PC-9 (cell line): ENCODE measurements at regions of chr9 and their contacts with region 1.

Region 1: GRCh38 chr9:35675732-35676392 is 2.1 kb downstream of the CA9 start:
- DNase-seq: no peak
- H3K4me3 ChIP-seq: no peak overlapping the region
- H3K27ac ChIP-seq: no peak overlapping the region
- H3K4me1 ChIP-seq: peaks cover 13% of the 10 kb centered on the region
- H3K27me3 ChIP-seq: no peaks in the 10 kb centered on the region
- CTCF ChIP-seq: no peak

Region 2: DNA sequence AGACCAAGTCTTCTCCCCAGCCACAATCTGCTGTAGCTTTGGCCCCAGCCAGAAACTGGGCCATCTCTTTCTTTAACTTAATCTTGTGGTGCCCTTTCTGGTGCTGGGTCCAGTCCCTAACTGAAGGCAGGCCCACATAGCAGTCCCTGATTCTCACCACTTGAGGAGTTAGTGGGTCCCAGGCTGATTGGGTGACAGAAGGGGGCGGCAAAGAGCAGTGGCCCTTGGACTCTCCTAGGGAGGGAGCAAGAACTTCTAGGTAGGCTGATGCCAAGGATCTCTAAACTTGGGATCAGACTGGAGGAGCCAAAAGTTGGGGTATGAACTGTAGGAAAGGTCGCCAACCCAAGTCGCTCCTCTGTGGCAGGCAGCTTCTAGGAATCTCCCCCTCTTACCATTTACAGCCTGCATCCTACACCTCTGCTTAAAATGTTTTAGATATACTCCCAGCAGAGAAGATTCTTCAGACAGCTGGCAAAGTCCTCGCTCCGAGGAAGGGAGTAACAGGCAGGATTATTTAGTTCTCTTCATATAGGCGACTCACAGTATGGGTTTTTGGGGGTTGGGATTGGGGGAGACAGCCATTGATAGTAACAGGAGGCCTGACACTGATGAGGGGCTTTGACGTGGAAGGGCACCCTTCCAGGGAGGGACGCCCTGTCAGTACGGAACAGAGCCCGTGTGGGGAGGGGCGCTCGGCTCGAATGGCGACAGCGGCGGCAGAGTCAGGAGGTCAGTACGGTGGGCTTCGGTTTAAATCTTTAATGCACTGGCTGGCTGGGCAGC is 1011.4 kb before region 1 on chr9:
- CTCF ChIA-PET with region 1: no interaction called
- POLR2A ChIA-PET with region 1: no interaction called
- intact Hi-C with region 1: no loop called
- DNase-seq: peak in 1 of 2 experiments; percentile 49
- H3K4me3 ChIP-seq: no peak overlapping the region
- H3K27ac ChIP-seq: no peak overlapping the region
- H3K4me1 ChIP-seq: no peaks in the 10 kb centered on the region
- H3K27me3 ChIP-seq: no peaks in the 10 kb centered on the region
- CTCF ChIP-seq: peak; percentile 69

Region 3: GRCh38 chr9:35711501-35712428 is 35.9 kb after region 1 on chr9:
- CTCF ChIA-PET with region 1: interaction called, 13 read pairs
- POLR2A ChIA-PET with region 1: no interaction called
- intact Hi-C with region 1: no loop called
- DNase-seq: peak; percentile 86 to 92
- H3K4me3 ChIP-seq: no peak overlapping the region
- H3K27ac ChIP-seq: peak overlapping the region; percentile 65
- H3K4me1 ChIP-seq: peaks cover 21% of the 10 kb centered on the region
- H3K27me3 ChIP-seq: no peaks in the 10 kb centered on the region
- CTCF ChIP-seq: no peak; the same call in 1 of the 2 replicates

Region 4: DNA sequence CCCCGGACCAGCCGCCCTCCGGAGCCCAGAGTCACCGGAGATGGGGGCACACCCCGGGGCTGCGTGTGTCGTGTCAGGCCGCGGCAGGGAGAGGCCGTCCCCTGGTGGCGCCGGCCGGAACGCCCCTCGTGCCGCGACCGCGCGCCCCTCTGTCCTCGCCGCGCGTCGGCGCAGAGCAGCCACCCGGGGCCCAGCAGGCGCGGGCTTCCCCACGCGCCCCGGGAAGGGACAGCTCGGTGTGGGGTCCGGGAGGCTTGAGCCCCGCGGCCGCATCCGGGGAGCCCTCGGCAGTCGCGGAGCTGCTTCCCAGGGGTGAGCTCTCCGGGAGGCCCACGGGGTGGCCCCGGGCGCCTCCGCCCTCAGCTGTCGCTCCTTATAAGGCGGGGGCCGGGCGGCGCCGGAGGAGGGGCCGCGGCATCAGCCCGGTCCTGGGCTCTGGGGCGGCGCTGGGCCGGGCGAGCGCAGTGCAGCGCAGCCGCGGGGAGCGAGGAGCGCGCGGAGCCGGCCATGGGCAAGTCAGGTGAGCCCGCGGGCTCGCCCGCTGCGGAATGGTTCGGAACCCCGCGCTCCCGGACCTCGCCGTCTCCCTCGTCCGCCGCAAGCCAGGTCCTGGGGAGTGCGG is 460.5 kb after region 1 on chr9 and contains the start of gene GLIPR2:
- CTCF ChIA-PET with region 1: no interaction called
- POLR2A ChIA-PET with region 1: no interaction called
- intact Hi-C with region 1: no loop called
- DNase-seq: peak in 1 of 2 experiments; percentile 68
- H3K4me3 ChIP-seq: peak within 1 kb of the TSS; percentile 63
- H3K27ac ChIP-seq: no peak within 1 kb of the TSS
- H3K4me1 ChIP-seq: peaks cover 29% of the 10 kb centered on the region; the same call in 1 of the 2 replicates
- H3K27me3 ChIP-seq: no peaks in the 10 kb centered on the region
- CTCF ChIP-seq: no peak; the same call in 1 of the 2 replicates
- total RNA-seq, gene GLIPR2: 3.9 and 7.7 TPM in 2 replicates